GM12878 (cell line): ENCODE measurements at regions of chr6 and their contacts with region 1.

Region 1: DNA sequence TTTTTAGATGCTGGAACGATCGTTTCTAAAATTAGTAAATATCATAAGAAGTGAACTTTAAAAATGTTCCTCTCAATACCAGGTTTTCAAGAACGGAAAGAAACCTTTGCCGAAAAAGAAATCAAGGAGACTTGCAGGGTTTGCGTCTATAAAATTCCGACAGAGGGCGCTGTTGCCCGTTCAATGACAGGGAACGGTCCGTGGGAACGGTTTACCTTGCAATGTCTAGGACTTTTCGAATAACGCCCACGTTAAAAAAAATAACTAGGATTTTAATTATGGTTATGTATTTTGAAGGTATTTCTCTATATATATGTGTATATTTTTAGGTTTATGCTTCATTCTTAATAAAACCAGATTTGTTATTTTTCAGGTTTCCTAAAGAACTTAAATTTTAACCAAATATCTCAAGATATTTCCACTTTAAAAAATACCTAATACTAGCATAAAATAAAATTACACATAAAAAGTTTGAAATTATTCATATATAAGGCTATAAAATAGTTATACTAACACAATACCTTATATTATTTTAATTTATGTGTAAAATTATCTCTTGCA is 2.5 kb upstream of the TFAP2B start:
- DNase-seq: peak; percentile 19
- ATAC-seq: peak; percentile 85
- H3K4me3 ChIP-seq: peak overlapping the region; percentile 75
- H3K27ac ChIP-seq: no peak overlapping the region
- H3K4me1 ChIP-seq: no peaks in the 10 kb centered on the region
- H3K27me3 ChIP-seq: peaks cover 2 to 20% of the 10 kb centered on the region in 2 experiments; a peak in 3 of 4 replicates
- CTCF ChIP-seq: peak; percentile 68 to 92 (median 79)
- EP300 ChIP-seq: no peak
- POLR2A ChIP-seq: no peak
- RAD21 ChIP-seq: peak; percentile 92

Region 2: DNA sequence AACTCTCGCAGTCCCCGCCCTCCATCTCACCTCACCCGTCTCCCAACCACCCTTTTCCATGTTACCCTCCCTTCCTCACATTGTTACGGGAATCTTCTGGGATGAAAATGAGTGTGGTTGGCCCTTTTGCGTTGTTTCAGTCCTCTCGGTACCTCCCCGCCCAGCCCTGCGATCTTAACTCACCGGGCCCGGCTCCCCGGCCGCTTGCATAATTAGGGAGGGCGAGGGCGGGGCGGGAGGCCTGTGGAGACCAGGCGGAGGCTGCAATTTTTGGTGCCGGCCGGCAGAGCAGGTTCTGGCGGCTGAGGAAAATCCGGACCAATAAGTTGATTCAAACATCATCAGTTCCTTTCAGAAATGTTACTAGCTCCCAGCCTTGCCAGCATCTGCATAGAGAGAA is 27.6 kb after region 1 on chr6:
- CTCF ChIA-PET with region 1: no interaction called
- POLR2A ChIA-PET with region 1: no interaction called
- RAD21 ChIA-PET with region 1: no interaction called
- SMC1A ChIA-PET with region 1: no interaction called
- in situ Hi-C with region 1: no loop called
- intact Hi-C with region 1: no loop called
- DNase-seq: no peak
- ATAC-seq: peak; percentile 47; the same call in 2 of the 3 replicates
- H3K4me3 ChIP-seq: no peak overlapping the region
- H3K27ac ChIP-seq: no peak overlapping the region
- H3K4me1 ChIP-seq: no peaks in the 10 kb centered on the region
- H3K27me3 ChIP-seq: peaks cover 10 to 20% of the 10 kb centered on the region in 2 experiments
- CTCF ChIP-seq: no peak
- EP300 ChIP-seq: no peak
- POLR2A ChIP-seq: no peak
- RAD21 ChIP-seq: no peak

Region 3: GRCh38 chr6:51350308-51350904 is 534.2 kb after region 1 on chr6:
- CTCF ChIA-PET with region 1: interaction called, 9 read pairs
- POLR2A ChIA-PET with region 1: no interaction called
- RAD21 ChIA-PET with region 1: interaction called, 6 read pairs
- SMC1A ChIA-PET with region 1: interaction called, 6 read pairs
- in situ Hi-C with region 1: loop called (anchors 10 kb)
- intact Hi-C with region 1: loop called (anchors 1 kb)
- DNase-seq: no peak
- ATAC-seq: peak; percentile 56; the same call in 2 of the 3 replicates
- H3K4me3 ChIP-seq: no peak overlapping the region
- H3K27ac ChIP-seq: no peak overlapping the region
- H3K4me1 ChIP-seq: no peaks in the 10 kb centered on the region
- H3K27me3 ChIP-seq: no peaks in the 10 kb centered on the region
- CTCF ChIP-seq: peak in 2 of 3 experiments; percentile 27 to 37; a peak in 3 of 6 replicates
- EP300 ChIP-seq: no peak
- POLR2A ChIP-seq: no peak
- RAD21 ChIP-seq: peak; percentile 35

Region 4: GRCh38 chr6:51513891-51514747 is 697.9 kb after region 1 on chr6:
- CTCF ChIA-PET with region 1: interaction called, 3 read pairs
- POLR2A ChIA-PET with region 1: no interaction called
- RAD21 ChIA-PET with region 1: no interaction called
- SMC1A ChIA-PET with region 1: interaction called, 3 read pairs
- in situ Hi-C with region 1: no loop called
- intact Hi-C with region 1: loop called (anchors 1 kb)
- DNase-seq: no peak
- ATAC-seq: no peak; the same call in 2 of the 3 replicates
- H3K4me3 ChIP-seq: no peak overlapping the region
- H3K27ac ChIP-seq: no peak overlapping the region
- H3K4me1 ChIP-seq: no peaks in the 10 kb centered on the region
- H3K27me3 ChIP-seq: no peaks in the 10 kb centered on the region
- CTCF ChIP-seq: no peak
- EP300 ChIP-seq: no peak
- POLR2A ChIP-seq: no peak
- RAD21 ChIP-seq: no peak

Region 5: GRCh38 chr6:51753635-51754034 is 937.4 kb after region 1 on chr6:
- CTCF ChIA-PET with region 1: interaction called, 11 read pairs
- POLR2A ChIA-PET with region 1: no interaction called
- RAD21 ChIA-PET with region 1: no interaction called
- SMC1A ChIA-PET with region 1: no interaction called
- in situ Hi-C with region 1: no loop called
- intact Hi-C with region 1: loop called (anchors 5 kb)
- DNase-seq: no peak
- ATAC-seq: peak; percentile 68
- H3K4me3 ChIP-seq: no peak overlapping the region
- H3K27ac ChIP-seq: no peak overlapping the region
- H3K4me1 ChIP-seq: no peaks in the 10 kb centered on the region
- H3K27me3 ChIP-seq: no peaks in the 10 kb centered on the region
- CTCF ChIP-seq: peak; percentile 44 to 53 (median 47); a peak in 5 of 6 replicates
- EP300 ChIP-seq: no peak
- POLR2A ChIP-seq: no peak
- RAD21 ChIP-seq: peak; percentile 47

Region 6: GRCh38 chr6:52020945-52021570 is 1204.9 kb after region 1 on chr6:
- CTCF ChIA-PET with region 1: interaction called, 5 read pairs
- POLR2A ChIA-PET with region 1: no interaction called
- RAD21 ChIA-PET with region 1: interaction called, 3 read pairs
- SMC1A ChIA-PET with region 1: no interaction called
- in situ Hi-C with region 1: loop called (anchors 10 kb)
- intact Hi-C with region 1: loop called (anchors 1 kb)
- DNase-seq: no peak
- ATAC-seq: peak; percentile 52; the same call in 2 of the 3 replicates
- H3K4me3 ChIP-seq: no peak overlapping the region
- H3K27ac ChIP-seq: no peak overlapping the region
- H3K4me1 ChIP-seq: no peaks in the 10 kb centered on the region
- H3K27me3 ChIP-seq: no peaks in the 10 kb centered on the region; a peak in 1 of 4 replicates
- CTCF ChIP-seq: peak; percentile 45 to 70 (median 48); a peak in 4 of 6 replicates
- EP300 ChIP-seq: no peak
- POLR2A ChIP-seq: no peak
- RAD21 ChIP-seq: peak; percentile 93